ENCODE measurements at regions of chr13 and their contacts with region 1.

Region 1: GRCh38 chr13:32586080-32586900 is at the start of gene PDS5B:
- DNase-seq: peak; percentile 92
- H3K4me3 Mint-ChIP-seq: peak within 1 kb of the TSS; percentile 74
- H3K27ac Mint-ChIP-seq: peak within 1 kb of the TSS; percentile 67
- H3K4me1 Mint-ChIP-seq: peaks cover 17% of the 10 kb centered on the region
- H3K27me3 Mint-ChIP-seq: no peaks in the 10 kb centered on the region
- CTCF ChIP-seq: peak; percentile 53
- total RNA-seq, gene PDS5B: 28.8 and 33.9 TPM in 2 replicates

Region 2: GRCh38 chr13:32504263-32504927 is 81.9 kb before region 1 on chr13:
- CTCF ChIA-PET with region 1: no interaction called
- intact Hi-C with region 1: no loop called
- DNase-seq: no peak
- H3K4me3 Mint-ChIP-seq: no peak overlapping the region
- H3K27ac Mint-ChIP-seq: no peak overlapping the region
- H3K4me1 Mint-ChIP-seq: no peaks in the 10 kb centered on the region
- H3K27me3 Mint-ChIP-seq: no peaks in the 10 kb centered on the region
- CTCF ChIP-seq: no peak

Region 3: GRCh38 chr13:32639502-32640105 is 53.3 kb after region 1 on chr13:
- CTCF ChIA-PET with region 1: interaction called, 8 read pairs
- intact Hi-C with region 1: loop called (anchors 1 kb)
- DNase-seq: peak; percentile 23
- H3K4me3 Mint-ChIP-seq: no peak overlapping the region
- H3K27ac Mint-ChIP-seq: no peak overlapping the region
- H3K4me1 Mint-ChIP-seq: peaks cover 18% of the 10 kb centered on the region
- H3K27me3 Mint-ChIP-seq: no peaks in the 10 kb centered on the region
- CTCF ChIP-seq: peak; percentile 16

Region 4: GRCh38 chr13:32911506-32911905 is 325.2 kb after region 1 on chr13:
- CTCF ChIA-PET with region 1: no interaction called
- intact Hi-C with region 1: no loop called
- DNase-seq: peak; percentile 16
- H3K4me3 Mint-ChIP-seq: no peak overlapping the region
- H3K27ac Mint-ChIP-seq: no peak overlapping the region
- H3K4me1 Mint-ChIP-seq: peaks cover 16% of the 10 kb centered on the region
- H3K27me3 Mint-ChIP-seq: no peaks in the 10 kb centered on the region
- CTCF ChIP-seq: no peak

Measured in Calu3 (cell line).